ENCODE measurements at regions of chr1 and their contacts with region 1.

Region 1: GRCh38 chr1:222465211-222466041 is 82.5 kb downstream of the HHIPL2 start:
- DNase-seq: peak; percentile 89
- ATAC-seq: peak; percentile 93
- H3K4me3 Mint-ChIP-seq: peak overlapping the region; percentile 92
- H3K27ac Mint-ChIP-seq: peak overlapping the region; percentile 98
- H3K4me1 Mint-ChIP-seq: peaks cover 13% of the 10 kb centered on the region
- H3K27me3 Mint-ChIP-seq: peaks cover 6% of the 10 kb centered on the region
- CTCF ChIP-seq: peak; percentile 100

Region 2: DNA sequence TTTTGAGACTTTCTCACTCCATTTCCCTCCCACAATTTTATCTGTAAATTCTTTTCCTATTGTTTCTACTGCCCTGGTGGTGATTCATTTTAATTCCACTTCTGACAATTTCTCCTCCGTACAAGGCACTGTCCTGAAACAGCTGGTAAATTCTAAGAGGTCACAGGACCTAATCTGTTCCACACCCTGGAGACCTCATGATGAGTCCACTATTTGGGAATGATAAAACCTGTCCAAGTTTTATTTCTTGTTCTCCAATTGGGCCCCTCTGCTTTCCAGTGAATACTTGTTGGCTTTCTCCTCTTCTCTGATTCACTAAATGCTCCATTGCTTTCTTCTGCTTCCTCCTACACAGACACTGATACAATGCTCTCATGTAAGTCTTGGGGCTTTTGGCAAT is 380.4 kb before region 1 on chr1:
- CTCF ChIA-PET with region 1: no interaction called
- POLR2A ChIA-PET with region 1: no interaction called
- intact Hi-C with region 1: no loop called
- DNase-seq: no peak
- ATAC-seq: no peak
- H3K4me3 Mint-ChIP-seq: no peak overlapping the region
- H3K27ac Mint-ChIP-seq: no peak overlapping the region
- H3K4me1 Mint-ChIP-seq: peaks cover 5% of the 10 kb centered on the region
- H3K27me3 Mint-ChIP-seq: peaks cover 3% of the 10 kb centered on the region
- CTCF ChIP-seq: no peak

Region 3: GRCh38 chr1:222589462-222590302 is 124.3 kb after region 1 on chr1 and contains the start of gene TAF1A:
- CTCF ChIA-PET with region 1: no interaction called
- POLR2A ChIA-PET with region 1: no interaction called
- intact Hi-C with region 1: loop called (anchors 1 kb)
- DNase-seq: peak; percentile 67
- ATAC-seq: peak; percentile 98
- H3K4me3 Mint-ChIP-seq: peak within 1 kb of the TSS; percentile 99
- H3K27ac Mint-ChIP-seq: peak within 1 kb of the TSS; percentile 99
- H3K4me1 Mint-ChIP-seq: peaks cover 57% of the 10 kb centered on the region
- H3K27me3 Mint-ChIP-seq: no peaks in the 10 kb centered on the region
- CTCF ChIP-seq: no peak
- total RNA-seq, gene TAF1A: 15.2 and 19.1 TPM in 2 replicates

Region 4: GRCh38 chr1:222634180-222635013 is 169.0 kb after region 1 on chr1:
- CTCF ChIA-PET with region 1: interaction called, 69 read pairs
- POLR2A ChIA-PET with region 1: interaction called, 9 read pairs
- intact Hi-C with region 1: loop called (anchors 1 kb)
- DNase-seq: no peak
- ATAC-seq: peak; percentile 85
- H3K4me3 Mint-ChIP-seq: no peak overlapping the region
- H3K27ac Mint-ChIP-seq: no peak overlapping the region
- H3K4me1 Mint-ChIP-seq: peaks cover 17% of the 10 kb centered on the region
- H3K27me3 Mint-ChIP-seq: no peaks in the 10 kb centered on the region
- CTCF ChIP-seq: no peak

Region 5: DNA sequence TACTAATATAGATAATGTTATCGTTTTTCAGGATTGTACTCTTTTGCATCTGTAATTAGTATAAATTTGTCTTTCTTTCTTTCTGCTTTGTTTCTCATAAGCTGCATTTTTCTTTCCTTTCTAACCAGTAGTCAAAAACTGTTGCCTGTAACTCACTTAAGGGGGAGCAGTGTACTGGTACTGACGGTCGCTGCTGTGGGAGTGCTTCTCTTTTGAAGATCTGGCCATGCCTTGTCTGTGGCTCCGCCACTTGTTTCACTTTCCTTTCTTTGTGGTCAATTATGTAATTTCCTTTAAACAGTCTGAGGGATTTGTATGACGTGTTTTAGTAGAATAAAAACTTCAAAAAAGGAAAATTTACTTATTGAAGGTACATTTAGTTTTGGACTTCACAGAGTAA is 189.4 kb after region 1 on chr1:
- CTCF ChIA-PET with region 1: no interaction called
- POLR2A ChIA-PET with region 1: no interaction called
- intact Hi-C with region 1: loop called (anchors 1 kb)
- DNase-seq: no peak
- ATAC-seq: peak; percentile 99
- H3K4me3 Mint-ChIP-seq: peak overlapping the region; percentile 39
- H3K27ac Mint-ChIP-seq: peak overlapping the region; percentile 80
- H3K4me1 Mint-ChIP-seq: peaks cover 33% of the 10 kb centered on the region
- H3K27me3 Mint-ChIP-seq: no peaks in the 10 kb centered on the region
- CTCF ChIP-seq: no peak

Region 6: DNA sequence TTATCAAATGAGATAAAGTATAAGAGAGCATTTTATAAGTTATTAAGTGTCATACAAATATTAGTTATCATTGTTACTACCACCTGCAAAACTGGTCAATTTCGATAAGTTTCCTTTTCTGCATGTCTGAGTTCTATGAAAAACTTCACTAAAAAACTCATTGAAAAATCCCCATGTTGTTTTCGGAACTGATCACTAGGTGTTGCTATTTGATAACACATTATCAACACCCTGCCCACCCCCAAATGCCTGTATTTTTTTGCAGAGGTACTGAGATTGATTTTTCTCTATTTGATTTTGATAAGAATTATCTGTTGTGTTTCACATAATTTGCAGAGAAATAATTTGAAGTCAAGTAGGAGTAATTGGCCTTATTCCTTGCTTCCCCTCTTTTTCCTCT is 327.3 kb after region 1 on chr1:
- CTCF ChIA-PET with region 1: no interaction called
- POLR2A ChIA-PET with region 1: no interaction called
- intact Hi-C with region 1: loop called (anchors 2 kb)
- DNase-seq: no peak
- ATAC-seq: no peak
- H3K4me3 Mint-ChIP-seq: no peak overlapping the region
- H3K27ac Mint-ChIP-seq: peak overlapping the region; percentile 13
- H3K4me1 Mint-ChIP-seq: peaks cover 34% of the 10 kb centered on the region
- H3K27me3 Mint-ChIP-seq: no peaks in the 10 kb centered on the region
- CTCF ChIP-seq: peak; percentile 38

Region 7: DNA sequence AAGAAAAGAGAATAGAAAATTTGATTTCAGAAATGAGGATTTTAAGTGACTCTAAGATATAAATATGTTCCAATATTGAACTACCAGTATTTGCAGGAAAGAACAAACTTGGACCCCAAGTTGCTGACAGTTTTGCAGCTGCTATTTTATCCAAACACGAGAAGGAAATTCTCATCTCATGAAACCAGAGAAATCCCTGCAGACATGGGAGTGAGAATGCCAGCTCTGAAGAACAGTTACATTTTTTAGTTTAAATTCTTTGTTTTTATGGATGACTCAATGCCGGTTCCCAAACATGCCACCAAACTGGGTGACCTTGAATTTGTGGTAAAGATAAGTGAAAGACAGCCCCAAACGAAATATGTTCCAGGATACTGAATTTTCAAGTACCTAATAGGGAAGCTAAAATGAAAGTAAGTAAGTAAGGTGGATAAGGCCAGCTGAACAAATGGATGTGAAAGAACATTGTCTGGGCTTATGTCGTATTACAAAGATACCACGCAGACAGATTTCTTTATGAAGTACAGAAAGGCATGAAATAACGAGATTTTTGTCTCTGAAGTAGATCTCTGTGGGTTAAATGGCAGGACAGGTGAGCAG is 657.7 kb after region 1 on chr1:
- CTCF ChIA-PET with region 1: interaction called, 3 read pairs
- POLR2A ChIA-PET with region 1: no interaction called
- intact Hi-C with region 1: loop called (anchors 1 kb)
- DNase-seq: no peak
- ATAC-seq: no peak
- H3K4me3 Mint-ChIP-seq: peak overlapping the region; percentile 36
- H3K27ac Mint-ChIP-seq: no peak overlapping the region
- H3K4me1 Mint-ChIP-seq: peaks cover 8% of the 10 kb centered on the region
- H3K27me3 Mint-ChIP-seq: peaks cover 7% of the 10 kb centered on the region
- CTCF ChIP-seq: no peak

Measured in activated B cell treated with CpG ODN at 0.5 μM for 24 hours (primary cell).